A673 (cell line): ENCODE measurements at regions of chr2 and their contacts with region 1.

Region 1: GRCh38 chr2:69567157-69567908 is 76.2 kb downstream of the AAK1 start:
- DNase-seq: peak; percentile 14
- H3K4me3 ChIP-seq: no peak overlapping the region
- H3K27ac ChIP-seq: no peak overlapping the region
- H3K4me1 ChIP-seq: no peaks in the 10 kb centered on the region
- H3K27me3 ChIP-seq: no peaks in the 10 kb centered on the region
- CTCF ChIP-seq: no peak

Region 2: GRCh38 chr2:69104261-69104660 is 463.1 kb before region 1 on chr2:
- CTCF ChIA-PET with region 1: no interaction called
- POLR2A ChIA-PET with region 1: no interaction called
- intact Hi-C with region 1: no loop called
- DNase-seq: no peak
- H3K4me3 ChIP-seq: no peak overlapping the region
- H3K27ac ChIP-seq: no peak overlapping the region
- H3K4me1 ChIP-seq: peaks cover 22% of the 10 kb centered on the region
- H3K27me3 ChIP-seq: no peaks in the 10 kb centered on the region
- CTCF ChIP-seq: no peak

Region 3: DNA sequence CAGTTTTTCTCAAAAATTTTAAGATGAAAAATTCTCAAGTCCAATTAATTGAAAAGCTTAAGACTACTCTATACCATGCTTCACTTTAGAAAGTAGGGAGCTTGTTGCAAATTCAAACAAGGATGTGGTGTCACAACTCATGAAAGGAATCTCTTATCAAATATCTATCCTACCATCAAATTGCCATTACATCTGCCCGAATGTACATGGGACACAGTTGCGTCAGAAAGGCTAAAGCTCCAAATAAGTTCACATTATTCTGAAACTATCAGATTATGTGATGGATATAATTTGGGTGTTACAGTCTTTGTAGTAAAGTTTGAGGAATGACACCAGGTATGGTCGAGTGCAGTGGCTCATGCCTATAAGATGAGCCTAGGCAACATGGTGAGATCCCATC is 116.8 kb after region 1 on chr2:
- CTCF ChIA-PET with region 1: no interaction called
- POLR2A ChIA-PET with region 1: interaction called, 20 read pairs
- intact Hi-C with region 1: no loop called
- DNase-seq: no peak
- H3K4me3 ChIP-seq: no peak overlapping the region
- H3K27ac ChIP-seq: no peak overlapping the region
- H3K4me1 ChIP-seq: no peaks in the 10 kb centered on the region
- H3K27me3 ChIP-seq: no peaks in the 10 kb centered on the region
- CTCF ChIP-seq: no peak